HepG2 (cell line): ENCODE measurements at regions of chr2 and their contacts with region 1.

Region 1: GRCh38 chr2:168773719-168774521 is 28.5 kb upstream of the NOSTRIN start:
- DNase-seq: peak; percentile 71
- ATAC-seq: peak; percentile 96
- H3K4me3 ChIP-seq: no peak overlapping the region
- H3K27ac ChIP-seq: no peak overlapping the region
- H3K4me1 ChIP-seq: no peaks in the 10 kb centered on the region
- H3K27me3 ChIP-seq: no peaks in the 10 kb centered on the region
- CTCF ChIP-seq: peak; percentile 91
- EP300 ChIP-seq: no peak
- POLR2A ChIP-seq: no peak
- RAD21 ChIP-seq: peak; percentile 76

Region 2: GRCh38 chr2:168455648-168456520 is 318.0 kb before region 1 on chr2 and contains the start of gene CERS6:
- CTCF ChIA-PET with region 1: no interaction called
- POLR2A ChIA-PET with region 1: no interaction called
- in situ Hi-C with region 1: no loop called
- intact Hi-C with region 1: no loop called
- DNase-seq: peak; percentile 89
- ATAC-seq: peak; percentile 95
- H3K4me3 ChIP-seq: peak within 1 kb of the TSS; percentile 81 to 88 (median 86)
- H3K27ac ChIP-seq: peak within 1 kb of the TSS; percentile 80
- H3K4me1 ChIP-seq: peaks cover 56% of the 10 kb centered on the region
- H3K27me3 ChIP-seq: no peaks in the 10 kb centered on the region; a peak in 1 of 5 replicates
- CTCF ChIP-seq: no peak; the same call in 1 of the 2 replicates
- EP300 ChIP-seq: no peak
- POLR2A ChIP-seq: peak; percentile 77 to 98
- RAD21 ChIP-seq: no peak; the same call in 1 of the 2 replicates
- total RNA-seq, gene CERS6: 17.3 and 20.3 TPM in 2 replicates

Region 3: GRCh38 chr2:168758970-168759820 is 14.7 kb before region 1 on chr2:
- CTCF ChIA-PET with region 1: no interaction called
- POLR2A ChIA-PET with region 1: no interaction called
- in situ Hi-C with region 1: no loop called
- intact Hi-C with region 1: no loop called
- DNase-seq: peak; percentile 64
- ATAC-seq: peak; percentile 95
- H3K4me3 ChIP-seq: no peak overlapping the region
- H3K27ac ChIP-seq: no peak overlapping the region
- H3K4me1 ChIP-seq: peaks cover 5% of the 10 kb centered on the region; the same call in 1 of the 2 replicates
- H3K27me3 ChIP-seq: no peaks in the 10 kb centered on the region
- CTCF ChIP-seq: peak; percentile 77
- EP300 ChIP-seq: no peak
- POLR2A ChIP-seq: no peak
- RAD21 ChIP-seq: peak; percentile 61; the same call in 1 of the 2 replicates

Region 4: DNA sequence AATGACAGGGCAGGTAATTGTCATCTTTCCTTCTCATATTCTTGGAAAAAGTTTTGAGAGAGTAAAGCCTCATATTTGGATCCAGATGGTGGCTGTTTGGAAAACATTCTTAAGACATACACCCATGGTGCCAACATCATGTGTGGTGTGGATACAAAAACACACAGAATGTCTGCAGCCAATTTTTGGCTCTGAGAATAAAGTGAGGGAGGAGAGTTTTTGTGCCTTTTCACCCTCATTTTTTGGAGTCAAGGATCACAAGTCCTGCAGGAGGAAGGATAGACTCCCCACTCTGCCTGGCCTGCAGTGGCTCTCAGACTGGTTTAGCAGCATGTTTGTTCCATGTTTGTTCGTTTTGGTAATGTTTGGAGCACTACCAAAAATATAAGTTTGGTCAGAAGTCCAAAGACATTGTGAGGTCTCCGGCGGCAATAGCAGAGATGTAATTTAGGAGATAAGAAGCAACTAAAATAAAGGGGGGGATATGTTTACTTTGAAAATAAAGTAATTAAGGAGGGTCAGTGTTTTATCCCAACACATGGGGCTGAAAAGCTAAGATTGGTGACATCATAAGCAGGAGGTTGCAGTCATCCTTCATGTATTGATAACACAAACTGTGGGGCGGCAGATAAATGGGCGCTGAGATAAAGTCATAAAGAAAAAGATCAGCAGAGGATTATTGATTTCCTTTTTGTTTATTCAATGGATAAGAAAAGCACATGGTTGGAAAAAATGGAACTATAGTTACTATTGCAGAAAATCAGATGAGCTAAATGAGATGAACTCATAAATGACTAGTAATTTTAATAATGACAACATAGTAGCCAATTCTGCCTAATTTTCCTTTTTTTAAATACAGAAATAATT is 29.2 kb after region 1 on chr2:
- CTCF ChIA-PET with region 1: no interaction called
- POLR2A ChIA-PET with region 1: no interaction called
- in situ Hi-C with region 1: no loop called
- intact Hi-C with region 1: no loop called
- DNase-seq: no peak
- ATAC-seq: no peak
- H3K4me3 ChIP-seq: no peak overlapping the region
- H3K27ac ChIP-seq: no peak overlapping the region
- H3K4me1 ChIP-seq: peaks cover 17% of the 10 kb centered on the region
- H3K27me3 ChIP-seq: no peaks in the 10 kb centered on the region
- CTCF ChIP-seq: no peak
- EP300 ChIP-seq: no peak
- POLR2A ChIP-seq: no peak
- RAD21 ChIP-seq: no peak

Region 5: GRCh38 chr2:168849610-168850009 is 75.7 kb after region 1 on chr2:
- CTCF ChIA-PET with region 1: interaction called, 4 read pairs
- POLR2A ChIA-PET with region 1: no interaction called
- in situ Hi-C with region 1: no loop called
- intact Hi-C with region 1: loop called (anchors 1 kb)
- DNase-seq: peak; percentile 73
- ATAC-seq: peak; percentile 97
- H3K4me3 ChIP-seq: no peak overlapping the region
- H3K27ac ChIP-seq: no peak overlapping the region
- H3K4me1 ChIP-seq: peaks cover 14% of the 10 kb centered on the region
- H3K27me3 ChIP-seq: no peaks in the 10 kb centered on the region
- CTCF ChIP-seq: peak; percentile 77
- EP300 ChIP-seq: peak in 1 of 2 experiments; percentile 39; a peak in 1 of 4 replicates
- POLR2A ChIP-seq: no peak
- RAD21 ChIP-seq: peak; percentile 57; the same call in 1 of the 2 replicates

Region 6: DNA sequence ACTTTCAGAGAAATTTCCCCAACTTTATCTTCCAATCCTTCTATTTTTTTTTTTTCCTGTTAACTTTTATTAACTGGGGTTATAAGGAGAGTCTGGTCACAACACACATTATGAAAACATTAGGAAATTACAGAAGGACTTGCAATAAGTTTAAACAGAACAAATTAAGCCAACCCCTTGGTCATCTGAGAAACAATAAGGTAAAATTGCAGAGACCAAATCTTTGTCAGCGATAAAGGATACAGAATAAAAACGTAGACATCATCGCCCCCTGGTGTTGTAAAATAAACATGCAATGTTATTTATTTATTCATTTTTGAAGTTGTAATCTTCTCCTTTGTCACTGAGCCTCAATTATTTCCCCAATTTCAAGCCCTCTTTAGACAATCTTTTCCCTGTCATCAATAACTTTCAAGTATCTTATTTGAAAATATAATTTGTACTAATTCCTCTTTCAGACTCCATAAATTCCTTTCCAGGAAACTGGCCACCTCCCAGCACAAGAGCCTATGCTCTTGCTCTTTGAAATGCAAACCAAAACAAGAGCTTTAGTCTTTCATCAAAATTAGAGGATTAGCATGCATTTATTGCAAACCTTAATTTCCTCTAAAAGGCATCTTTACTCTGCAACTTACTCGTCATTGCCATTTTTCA is 146.7 kb after region 1 on chr2:
- CTCF ChIA-PET with region 1: interaction called, 50 read pairs
- POLR2A ChIA-PET with region 1: no interaction called
- in situ Hi-C with region 1: loop called (anchors 5 kb)
- intact Hi-C with region 1: loop called (anchors 1 kb)
- DNase-seq: peak; percentile 34
- ATAC-seq: peak; percentile 45; the same call in 1 of the 3 replicates
- H3K4me3 ChIP-seq: no peak overlapping the region
- H3K27ac ChIP-seq: no peak overlapping the region
- H3K4me1 ChIP-seq: no peaks in the 10 kb centered on the region
- H3K27me3 ChIP-seq: peaks cover 0 to 8% of the 10 kb centered on the region in 2 experiments; a peak in 2 of 5 replicates
- CTCF ChIP-seq: peak; percentile 73
- EP300 ChIP-seq: no peak
- POLR2A ChIP-seq: no peak
- RAD21 ChIP-seq: 0 out of 2 replicates have a peak, but pooled peaks have one; percentile 22